GM10248 (cell line): ENCODE measurements at regions of chr12 and their contacts with region 1.

Region 1: GRCh38 chr12:9750276-9751203 is 10.2 kb downstream of the CD69 start:
- DNase-seq: peak; percentile 54
- CTCF ChIP-seq: peak; percentile 66

Region 2: DNA sequence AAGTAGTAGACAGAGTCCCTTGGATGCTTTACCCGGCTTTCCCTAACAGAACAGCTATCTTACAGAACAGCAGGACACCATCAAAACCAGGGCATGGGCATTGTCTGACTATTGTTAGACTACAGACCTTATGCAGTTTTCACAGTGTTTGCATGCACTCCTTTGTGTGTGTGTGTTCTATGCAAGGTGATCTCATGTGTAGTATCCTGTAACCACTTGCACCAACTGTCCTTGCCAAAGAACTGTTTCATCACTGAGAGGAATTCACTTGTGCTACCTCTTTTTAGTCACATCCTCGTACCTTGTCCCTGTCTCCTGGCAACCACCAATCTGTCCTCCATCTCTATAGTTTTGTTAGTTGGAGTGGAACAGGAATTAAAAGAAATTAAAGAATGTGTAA is 358.7 kb before region 1 on chr12:
- CTCF ChIA-PET with region 1: no interaction called
- POLR2A ChIA-PET with region 1: no interaction called
- DNase-seq: no peak
- CTCF ChIP-seq: no peak

Region 3: DNA sequence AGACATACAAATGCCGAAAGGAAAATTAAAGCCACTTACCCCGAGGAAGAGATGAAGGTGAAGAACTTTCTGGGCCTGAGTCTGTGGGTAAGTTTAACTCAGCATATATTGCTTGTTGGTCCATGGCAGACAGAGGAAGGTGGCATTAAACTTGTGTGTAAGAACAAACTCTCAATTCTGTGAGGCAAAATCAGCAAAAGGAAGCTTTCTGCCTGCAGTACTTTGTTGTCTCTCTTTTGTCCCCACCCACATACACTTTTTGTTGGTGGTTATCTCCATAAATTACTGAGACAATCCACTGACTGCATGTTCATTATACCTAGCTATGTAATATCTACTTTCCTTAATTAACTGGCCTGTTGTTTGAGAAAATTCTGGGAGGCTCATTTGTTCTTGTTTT is 142.8 kb before region 1 on chr12 and contains the start of gene KLRB1:
- CTCF ChIA-PET with region 1: no interaction called
- POLR2A ChIA-PET with region 1: no interaction called
- DNase-seq: no peak
- CTCF ChIP-seq: no peak

Region 4: DNA sequence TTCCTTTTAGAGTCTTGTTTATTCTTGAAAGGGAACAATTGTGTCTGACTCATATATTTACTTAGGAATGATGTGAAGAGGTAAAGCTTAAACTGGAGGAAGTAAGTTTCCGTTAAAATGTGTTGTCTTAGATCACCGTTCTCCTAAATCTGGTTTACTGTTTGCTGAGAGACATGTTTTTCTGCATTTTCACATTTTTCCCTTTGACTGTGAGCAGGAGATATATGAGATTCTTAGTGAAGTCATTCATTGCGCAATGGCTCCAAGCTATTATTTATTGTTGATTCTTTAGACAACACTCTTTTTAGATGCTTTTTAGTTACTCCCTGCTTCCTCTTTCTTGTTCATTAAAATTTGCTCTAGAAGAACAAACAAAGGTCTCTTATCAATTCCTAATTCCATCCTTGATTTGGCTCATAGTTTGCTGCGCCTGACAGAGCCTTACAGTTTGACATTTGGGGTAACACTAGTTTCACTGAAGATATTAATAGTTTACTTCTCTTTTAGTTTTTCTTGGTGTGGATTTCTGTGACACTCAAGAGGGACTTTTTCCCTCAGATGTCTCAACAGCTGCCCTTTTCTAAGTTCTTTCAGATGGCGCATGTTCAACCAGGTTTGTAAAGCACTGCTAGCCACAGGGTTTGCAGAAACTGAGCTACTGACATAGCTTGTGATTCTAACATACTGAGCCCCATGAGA is 29.0 kb before region 1 on chr12:
- CTCF ChIA-PET with region 1: interaction called, 17 read pairs
- POLR2A ChIA-PET with region 1: interaction called, 3 read pairs
- DNase-seq: peak; percentile 47
- CTCF ChIP-seq: no peak

Region 5: DNA sequence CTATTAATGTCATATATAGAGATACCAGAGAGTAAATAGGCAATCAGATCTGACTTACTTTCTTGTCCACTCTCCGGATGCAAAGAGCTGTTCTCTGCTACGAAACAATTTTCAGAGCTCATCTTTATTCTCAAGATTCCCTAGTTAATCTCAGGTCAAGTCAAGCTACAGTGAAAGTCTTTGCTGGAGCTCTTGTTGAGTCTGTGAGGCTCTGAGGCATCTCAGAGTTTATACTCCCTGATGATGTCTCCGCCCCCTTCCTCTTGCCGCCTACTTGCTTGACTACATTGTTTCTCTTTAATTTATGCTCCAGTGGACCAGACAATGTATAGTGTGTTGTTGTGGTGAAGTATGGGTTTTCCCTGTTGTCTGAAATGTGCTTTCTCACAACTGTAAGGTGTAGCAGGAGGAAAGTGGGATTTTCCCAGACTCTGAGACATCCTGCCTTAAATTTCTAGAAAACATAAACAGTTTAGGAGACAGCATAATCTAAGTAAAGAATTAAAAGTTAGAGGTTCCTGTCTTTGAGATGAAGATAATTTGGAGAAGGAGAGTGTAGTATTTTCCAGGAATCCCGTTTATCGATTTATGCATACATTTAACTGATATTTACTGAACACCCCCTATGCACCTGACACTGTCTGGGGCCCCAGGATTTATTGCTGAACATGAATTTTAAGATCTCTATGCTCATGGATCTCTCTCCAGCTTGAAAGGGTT is 10.3 kb after region 1 on chr12 and contains the start of gene CD69:
- CTCF ChIA-PET with region 1: interaction called, 77 read pairs
- POLR2A ChIA-PET with region 1: interaction called, 6 read pairs
- DNase-seq: peak; percentile 42
- CTCF ChIP-seq: no peak

Region 6: GRCh38 chr12:9813821-9814809 is 63.6 kb after region 1 on chr12:
- CTCF ChIA-PET with region 1: interaction called, 36 read pairs
- POLR2A ChIA-PET with region 1: no interaction called
- DNase-seq: peak; percentile 92
- CTCF ChIP-seq: peak; percentile 98

Region 7: GRCh38 chr12:9944391-9944790 is 193.9 kb after region 1 on chr12:
- CTCF ChIA-PET with region 1: interaction called, 11 read pairs
- POLR2A ChIA-PET with region 1: no interaction called
- DNase-seq: no peak
- CTCF ChIP-seq: no peak

Region 8: GRCh38 chr12:10140001-10140400 is 389.5 kb after region 1 on chr12:
- CTCF ChIA-PET with region 1: interaction called, 32 read pairs
- POLR2A ChIA-PET with region 1: no interaction called
- DNase-seq: peak; percentile 35
- CTCF ChIP-seq: peak; percentile 38